ENCODE measurements at regions of chr12 and their contacts with region 1.

Region 1: GRCh38 chr12:65823513-65824375 is 539 bp upstream of the HMGA2 start:
- DNase-seq: peak; percentile 81
- H3K4me3 Mint-ChIP-seq: peak overlapping the region; percentile 87
- H3K27ac Mint-ChIP-seq: peak overlapping the region; percentile 87
- H3K4me1 Mint-ChIP-seq: peaks cover 33% of the 10 kb centered on the region
- H3K27me3 Mint-ChIP-seq: no peaks in the 10 kb centered on the region
- CTCF ChIP-seq: no peak

Region 2: GRCh38 chr12:65313719-65314317 is 509.9 kb before region 1 on chr12:
- CTCF ChIA-PET with region 1: no interaction called
- intact Hi-C with region 1: loop called (anchors 5 kb)
- DNase-seq: no peak
- H3K4me3 Mint-ChIP-seq: no peak overlapping the region
- H3K27ac Mint-ChIP-seq: no peak overlapping the region
- H3K4me1 Mint-ChIP-seq: peaks cover 6% of the 10 kb centered on the region
- H3K27me3 Mint-ChIP-seq: no peaks in the 10 kb centered on the region
- CTCF ChIP-seq: peak; percentile 43

Region 3: GRCh38 chr12:65602610-65603295 is 221.0 kb before region 1 on chr12:
- CTCF ChIA-PET with region 1: interaction called, 12 read pairs
- intact Hi-C with region 1: loop called (anchors 2 kb)
- DNase-seq: peak; percentile 93
- H3K4me3 Mint-ChIP-seq: peak overlapping the region; percentile 68
- H3K27ac Mint-ChIP-seq: peak overlapping the region; percentile 95
- H3K4me1 Mint-ChIP-seq: peaks cover 78% of the 10 kb centered on the region
- H3K27me3 Mint-ChIP-seq: no peaks in the 10 kb centered on the region
- CTCF ChIP-seq: peak; percentile 77

Region 4: DNA sequence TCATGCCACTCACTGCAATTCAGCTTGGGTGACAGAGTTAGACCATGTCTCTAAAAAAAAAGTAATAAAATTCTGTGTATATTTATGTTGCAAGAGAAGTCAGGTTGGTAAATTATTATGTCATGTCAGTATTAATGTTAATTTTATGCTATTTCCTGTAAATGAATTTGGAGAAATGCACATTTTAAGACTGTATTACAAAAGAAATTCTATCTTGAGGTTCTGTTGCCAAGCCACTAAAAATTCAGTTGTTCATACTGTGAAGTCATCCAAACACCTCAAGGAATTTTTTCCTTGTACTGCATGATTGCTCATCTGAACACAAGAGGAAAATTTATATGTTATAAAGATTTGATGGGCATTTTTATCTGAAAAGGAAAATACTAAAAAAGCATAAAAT is 22.8 kb before region 1 on chr12:
- CTCF ChIA-PET with region 1: no interaction called
- intact Hi-C with region 1: no loop called
- DNase-seq: no peak
- H3K4me3 Mint-ChIP-seq: no peak overlapping the region
- H3K27ac Mint-ChIP-seq: no peak overlapping the region
- H3K4me1 Mint-ChIP-seq: no peaks in the 10 kb centered on the region
- H3K27me3 Mint-ChIP-seq: no peaks in the 10 kb centered on the region
- CTCF ChIP-seq: no peak

Region 5: GRCh38 chr12:65878544-65878943 is 54.8 kb after region 1 on chr12:
- CTCF ChIA-PET with region 1: no interaction called
- intact Hi-C with region 1: loop called (anchors 2 kb)
- DNase-seq: peak; percentile 46
- H3K4me3 Mint-ChIP-seq: no peak overlapping the region
- H3K27ac Mint-ChIP-seq: no peak overlapping the region
- H3K4me1 Mint-ChIP-seq: peaks cover 41% of the 10 kb centered on the region
- H3K27me3 Mint-ChIP-seq: no peaks in the 10 kb centered on the region
- CTCF ChIP-seq: no peak

Region 6: GRCh38 chr12:65952737-65953209 is 129.0 kb after region 1 on chr12:
- CTCF ChIA-PET with region 1: no interaction called
- intact Hi-C with region 1: loop called (anchors 10 kb)
- DNase-seq: peak; percentile 24
- H3K4me3 Mint-ChIP-seq: peak overlapping the region; percentile 9
- H3K27ac Mint-ChIP-seq: peak overlapping the region; percentile 23
- H3K4me1 Mint-ChIP-seq: peaks cover 75% of the 10 kb centered on the region
- H3K27me3 Mint-ChIP-seq: no peaks in the 10 kb centered on the region
- CTCF ChIP-seq: no peak

Measured in Calu3 (cell line).